Activated B cell treated with CpG ODN at 0.5 μM for 24 hours (primary cell): ENCODE measurements at regions of chr7 and their contacts with region 1.

Region 1: DNA sequence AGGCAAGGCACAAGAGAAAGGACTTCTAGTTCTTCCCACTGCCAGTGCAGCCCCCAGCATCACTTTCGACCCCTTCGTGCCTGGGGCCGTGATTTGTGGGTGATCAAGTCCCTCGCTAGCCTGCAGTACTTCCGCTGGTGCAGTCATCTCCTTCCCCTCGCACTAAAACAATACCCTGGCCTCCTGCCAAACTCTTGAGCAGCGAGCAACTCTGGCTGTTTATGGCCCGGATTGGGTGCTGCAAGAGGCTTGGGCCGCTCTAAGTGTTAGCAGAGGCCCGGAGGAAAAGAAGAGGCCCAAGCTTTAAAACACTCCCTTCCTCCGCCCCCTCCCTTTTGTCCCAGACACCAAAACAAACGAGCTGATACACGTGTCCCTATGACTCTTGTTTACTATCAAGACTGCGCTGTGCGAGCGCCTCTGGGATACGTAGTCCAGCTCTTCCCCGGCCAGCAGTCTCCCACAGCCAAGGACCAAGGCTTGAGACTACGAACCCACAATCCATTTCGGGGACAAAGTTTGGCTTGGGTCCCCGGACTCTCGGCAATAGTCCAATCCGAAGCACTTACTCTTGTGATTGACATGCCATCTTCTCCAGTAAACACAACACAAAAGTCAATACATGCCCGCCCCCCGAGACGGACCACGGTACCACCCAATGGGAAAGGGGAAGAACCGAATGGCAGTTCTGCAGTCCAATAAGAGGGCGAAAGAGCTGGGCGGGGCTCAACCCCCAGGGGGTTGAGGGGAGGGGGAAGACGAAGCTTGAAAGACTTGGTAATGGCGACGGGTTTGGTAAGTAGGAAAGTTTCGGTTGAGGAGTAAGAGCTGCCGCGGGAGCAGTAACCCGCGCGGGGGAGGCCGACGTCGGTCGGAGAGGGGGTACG is at the start of gene HBP1:
- DNase-seq: peak; percentile 84
- ATAC-seq: peak; percentile 80
- H3K4me3 Mint-ChIP-seq: peak within 1 kb of the TSS; percentile 99
- H3K27ac Mint-ChIP-seq: peak within 1 kb of the TSS; percentile 99
- H3K4me1 Mint-ChIP-seq: peaks cover 45% of the 10 kb centered on the region
- H3K27me3 Mint-ChIP-seq: peaks cover 6% of the 10 kb centered on the region
- CTCF ChIP-seq: no peak
- total RNA-seq, gene HBP1: 53.6 and 59.9 TPM in 2 replicates

Region 2: GRCh38 chr7:106285051-106285854 is 883.2 kb before region 1 on chr7:
- CTCF ChIA-PET with region 1: no interaction called
- POLR2A ChIA-PET with region 1: interaction called, 14 read pairs
- intact Hi-C with region 1: loop called (anchors 1 kb)
- DNase-seq: peak; percentile 96
- ATAC-seq: peak; percentile 85
- H3K4me3 Mint-ChIP-seq: peak overlapping the region; percentile 89
- H3K27ac Mint-ChIP-seq: peak overlapping the region; percentile 98
- H3K4me1 Mint-ChIP-seq: peaks cover 31% of the 10 kb centered on the region
- H3K27me3 Mint-ChIP-seq: no peaks in the 10 kb centered on the region
- CTCF ChIP-seq: no peak

Region 3: DNA sequence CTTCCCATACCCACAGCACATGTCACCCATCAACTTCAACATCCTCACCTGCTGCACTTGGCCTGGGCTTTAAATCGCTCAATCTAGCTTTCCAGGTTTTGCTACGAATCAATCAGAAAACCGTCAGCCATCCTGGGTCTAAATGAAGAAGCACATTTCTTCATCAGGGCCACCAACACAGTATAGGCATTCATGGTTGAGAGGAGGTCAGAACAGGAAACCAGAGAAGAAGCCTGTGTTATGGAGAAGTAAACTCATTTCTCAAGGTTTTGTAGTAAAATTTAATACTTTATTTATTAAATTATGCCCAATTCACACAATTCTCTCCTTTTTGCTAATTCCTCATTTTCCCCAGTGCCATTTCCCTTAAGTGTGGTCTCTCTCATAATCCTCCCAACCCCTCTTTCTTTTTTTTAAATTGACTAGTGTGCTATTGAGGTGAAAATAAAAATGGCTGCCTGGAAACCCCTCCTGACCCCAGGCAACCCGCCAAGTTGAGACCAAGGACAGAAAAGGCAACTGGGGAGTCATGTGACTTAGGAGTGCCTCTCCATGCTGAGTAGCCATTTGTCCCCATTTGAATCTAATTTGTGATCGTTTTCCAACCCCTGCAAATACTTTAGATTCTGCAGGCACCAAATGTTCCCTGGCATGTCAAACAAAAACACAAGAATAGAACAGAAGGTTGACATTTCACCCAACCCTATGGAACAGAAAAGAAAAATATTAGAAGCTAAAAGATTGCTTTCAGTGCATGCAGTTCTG is 702.6 kb before region 1 on chr7:
- CTCF ChIA-PET with region 1: no interaction called
- POLR2A ChIA-PET with region 1: no interaction called
- intact Hi-C with region 1: no loop called
- DNase-seq: no peak
- ATAC-seq: peak; percentile 42
- H3K4me3 Mint-ChIP-seq: no peak overlapping the region
- H3K27ac Mint-ChIP-seq: no peak overlapping the region
- H3K4me1 Mint-ChIP-seq: peaks cover 14% of the 10 kb centered on the region
- H3K27me3 Mint-ChIP-seq: peaks cover 5% of the 10 kb centered on the region
- CTCF ChIP-seq: no peak

Region 4: GRCh38 chr7:106659963-106660861 is 508.3 kb before region 1 on chr7:
- CTCF ChIA-PET with region 1: interaction called, 3 read pairs
- POLR2A ChIA-PET with region 1: interaction called, 3 read pairs
- intact Hi-C with region 1: loop called (anchors 1 kb)
- DNase-seq: peak; percentile 79
- ATAC-seq: peak; percentile 52
- H3K4me3 Mint-ChIP-seq: peak overlapping the region; percentile 94
- H3K27ac Mint-ChIP-seq: peak overlapping the region; percentile 90
- H3K4me1 Mint-ChIP-seq: peaks cover 34% of the 10 kb centered on the region
- H3K27me3 Mint-ChIP-seq: no peaks in the 10 kb centered on the region
- CTCF ChIP-seq: peak; percentile 84

Region 5: DNA sequence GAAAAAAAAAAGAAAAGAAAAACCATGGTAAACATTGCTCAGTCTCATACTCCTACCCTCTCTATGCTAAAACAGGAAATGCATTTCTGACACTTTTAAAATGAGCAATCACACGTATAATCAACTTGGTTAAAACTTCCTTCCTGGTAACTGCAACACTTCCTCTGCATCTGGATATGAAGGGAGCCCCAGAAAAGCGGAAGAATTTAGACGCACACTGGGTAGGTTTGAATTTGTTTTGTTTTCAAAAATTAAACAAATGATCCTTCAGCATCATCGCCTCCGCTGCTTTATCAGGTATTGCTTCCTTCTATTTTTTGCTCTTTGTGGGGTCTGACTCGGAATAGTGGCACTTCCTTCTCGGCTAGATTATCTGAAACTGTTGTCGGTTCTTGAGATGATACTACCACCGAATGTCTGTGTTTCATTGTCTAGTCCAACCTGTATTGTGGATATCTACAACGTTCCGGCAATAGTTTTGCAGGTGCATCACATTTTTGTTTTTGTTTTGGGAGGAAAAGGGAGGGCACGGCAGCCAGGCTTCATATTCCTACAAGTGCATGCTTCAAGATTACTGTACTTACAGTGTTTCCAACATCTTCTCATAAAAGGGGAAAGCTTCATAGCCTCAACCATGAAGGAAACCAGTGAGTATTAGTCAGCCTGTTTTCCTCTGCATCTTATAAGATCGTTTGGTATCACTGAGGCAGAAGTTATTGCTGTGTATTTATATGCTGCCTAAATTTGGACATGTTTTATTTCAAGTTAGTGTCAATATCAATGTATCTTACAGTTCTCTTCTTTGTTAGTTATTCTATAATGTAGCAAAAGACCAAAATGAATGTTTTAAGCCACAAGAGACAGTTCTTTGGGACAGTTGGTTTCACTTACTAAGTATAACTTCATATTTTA is 303.1 kb before region 1 on chr7 and contains the start of gene PIK3CG:
- CTCF ChIA-PET with region 1: interaction called, 3 read pairs
- POLR2A ChIA-PET with region 1: interaction called, 27 read pairs
- intact Hi-C with region 1: loop called (anchors 1 kb)
- DNase-seq: no peak
- ATAC-seq: peak; percentile 83
- H3K4me3 Mint-ChIP-seq: peak within 1 kb of the TSS; percentile 91
- H3K27ac Mint-ChIP-seq: peak within 1 kb of the TSS; percentile 90
- H3K4me1 Mint-ChIP-seq: peaks cover 71% of the 10 kb centered on the region
- H3K27me3 Mint-ChIP-seq: no peaks in the 10 kb centered on the region
- CTCF ChIP-seq: no peak
- total RNA-seq, gene PIK3CG: 62.0 and 63.6 TPM in 2 replicates

Region 6: DNA sequence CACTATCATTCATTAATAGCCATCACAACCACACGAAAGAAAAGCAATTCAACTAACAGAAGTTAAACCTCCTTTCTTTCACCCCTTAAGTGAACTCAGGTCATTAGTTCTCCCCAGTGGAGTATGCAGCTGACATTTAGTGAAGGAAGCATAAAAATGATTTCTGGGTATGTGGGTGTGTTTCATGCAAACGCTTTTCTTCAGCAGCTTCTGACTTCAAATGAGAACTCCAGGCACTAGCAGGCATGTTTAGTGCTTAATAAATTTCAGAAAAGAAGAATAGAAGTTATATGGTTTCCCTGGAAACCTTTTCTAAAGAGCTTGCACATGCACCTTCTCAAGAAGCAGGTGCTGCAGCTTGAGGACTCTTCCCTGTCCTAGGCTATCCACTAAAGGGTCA is 240.9 kb before region 1 on chr7:
- CTCF ChIA-PET with region 1: no interaction called
- POLR2A ChIA-PET with region 1: no interaction called
- intact Hi-C with region 1: no loop called
- DNase-seq: no peak
- ATAC-seq: no peak
- H3K4me3 Mint-ChIP-seq: no peak overlapping the region
- H3K27ac Mint-ChIP-seq: no peak overlapping the region
- H3K4me1 Mint-ChIP-seq: peaks cover 5% of the 10 kb centered on the region
- H3K27me3 Mint-ChIP-seq: no peaks in the 10 kb centered on the region
- CTCF ChIP-seq: no peak

Region 7: DNA sequence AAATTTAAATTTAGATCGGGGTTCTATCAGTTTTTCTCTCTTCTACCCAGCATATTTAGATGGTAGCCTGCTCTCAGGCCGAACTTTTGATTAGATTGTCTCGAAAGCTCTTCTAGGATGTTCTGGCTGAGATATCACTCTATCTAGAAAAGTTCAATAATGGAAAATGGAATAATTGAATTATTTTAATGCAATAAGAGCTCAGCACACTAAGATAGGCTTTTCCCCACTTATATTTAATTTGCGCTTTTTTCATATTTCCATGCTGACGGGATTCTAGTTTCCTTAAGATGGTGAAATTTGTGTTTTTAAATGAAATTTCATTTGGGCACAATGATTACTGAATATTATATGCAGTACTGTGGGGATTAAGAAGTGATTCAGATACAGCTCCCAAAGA is 229.7 kb before region 1 on chr7:
- CTCF ChIA-PET with region 1: no interaction called
- POLR2A ChIA-PET with region 1: no interaction called
- intact Hi-C with region 1: no loop called
- DNase-seq: no peak
- ATAC-seq: no peak
- H3K4me3 Mint-ChIP-seq: no peak overlapping the region
- H3K27ac Mint-ChIP-seq: no peak overlapping the region
- H3K4me1 Mint-ChIP-seq: no peaks in the 10 kb centered on the region
- H3K27me3 Mint-ChIP-seq: no peaks in the 10 kb centered on the region
- CTCF ChIP-seq: no peak

Region 8: GRCh38 chr7:107150375-107151073 is 18.0 kb before region 1 on chr7:
- CTCF ChIA-PET with region 1: interaction called, 34 read pairs
- POLR2A ChIA-PET with region 1: interaction called, 32 read pairs
- intact Hi-C with region 1: loop called (anchors 1 kb)
- DNase-seq: peak; percentile 34
- ATAC-seq: peak; percentile 57
- H3K4me3 Mint-ChIP-seq: no peak overlapping the region
- H3K27ac Mint-ChIP-seq: no peak overlapping the region
- H3K4me1 Mint-ChIP-seq: peaks cover 7% of the 10 kb centered on the region
- H3K27me3 Mint-ChIP-seq: no peaks in the 10 kb centered on the region
- CTCF ChIP-seq: no peak

Region 9: DNA sequence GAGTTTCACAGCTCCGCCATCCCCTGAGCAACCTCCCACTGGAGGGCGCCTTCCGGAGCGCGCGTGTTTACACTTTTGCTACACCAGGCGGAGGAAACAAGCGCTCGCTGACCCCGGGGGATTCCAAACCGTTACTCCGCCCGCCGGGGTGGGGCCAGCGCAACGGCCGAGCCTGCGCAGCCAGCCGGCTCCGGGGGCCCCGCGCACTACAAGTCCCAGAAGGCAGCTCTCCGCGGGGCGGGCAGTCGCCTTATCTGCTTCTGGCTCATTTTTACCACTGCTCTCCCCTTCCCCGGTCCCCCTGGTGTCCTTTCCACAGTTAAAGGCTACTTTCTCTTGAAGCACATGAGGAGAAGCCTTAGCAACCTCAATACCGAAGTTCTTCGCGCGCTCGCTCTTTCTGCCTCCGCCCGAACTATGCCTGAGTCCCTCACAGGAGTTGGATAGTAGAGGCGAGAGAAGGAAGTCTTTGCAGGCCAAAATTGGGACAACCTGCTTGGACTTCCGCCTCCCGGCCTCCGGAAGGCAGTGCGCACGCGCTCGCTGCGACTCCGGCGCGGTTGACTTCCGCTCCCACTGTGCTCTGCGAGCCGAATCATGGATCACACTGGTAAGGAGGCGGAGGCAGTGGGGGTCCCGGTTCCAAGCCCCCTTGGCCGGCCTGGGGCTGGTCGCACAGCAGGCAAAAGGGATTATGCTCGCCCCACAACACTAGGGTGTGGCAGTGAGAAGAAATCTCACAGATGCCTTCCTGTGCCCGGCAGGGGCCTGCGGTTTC is 575.3 kb after region 1 on chr7 and contains the start of gene CBLL1:
- CTCF ChIA-PET with region 1: interaction called, 3 read pairs
- POLR2A ChIA-PET with region 1: interaction called, 45 read pairs
- intact Hi-C with region 1: loop called (anchors 1 kb)
- DNase-seq: peak; percentile 97
- ATAC-seq: peak; percentile 89
- H3K4me3 Mint-ChIP-seq: peak within 1 kb of the TSS; percentile 96
- H3K27ac Mint-ChIP-seq: peak within 1 kb of the TSS; percentile 99
- H3K4me1 Mint-ChIP-seq: peaks cover 53% of the 10 kb centered on the region
- H3K27me3 Mint-ChIP-seq: no peaks in the 10 kb centered on the region
- CTCF ChIP-seq: no peak
- total RNA-seq, gene CBLL1: 35.3 and 47.2 TPM in 2 replicates